WTC11 (cell line): ENCODE measurements at regions of chr17 and their contacts with region 1.

Region 1: GRCh38 chr17:38982858-38983746 is 15.9 kb upstream of the FBXO47 start:
- DNase-seq: peak; percentile 47
- ATAC-seq: peak; percentile 67
- H3K4me3 Mint-ChIP-seq: no peak overlapping the region
- H3K27ac Mint-ChIP-seq: no peak overlapping the region
- H3K4me1 Mint-ChIP-seq: no peaks in the 10 kb centered on the region
- H3K27me3 Mint-ChIP-seq: no peaks in the 10 kb centered on the region
- CTCF ChIP-seq: peak; percentile 35; the same call in 1 of the 2 replicates

Region 2: GRCh38 chr17:38881600-38882191 is 101.4 kb before region 1 on chr17:
- CTCF ChIA-PET with region 1: no interaction called
- POLR2A ChIA-PET with region 1: no interaction called
- DNase-seq: no peak
- ATAC-seq: no peak
- H3K4me3 Mint-ChIP-seq: peak overlapping the region; percentile 22; the same call in 1 of the 2 replicates
- H3K27ac Mint-ChIP-seq: peak overlapping the region; percentile 96
- H3K4me1 Mint-ChIP-seq: peaks cover 94% of the 10 kb centered on the region
- H3K27me3 Mint-ChIP-seq: no peaks in the 10 kb centered on the region
- CTCF ChIP-seq: no peak

Region 3: DNA sequence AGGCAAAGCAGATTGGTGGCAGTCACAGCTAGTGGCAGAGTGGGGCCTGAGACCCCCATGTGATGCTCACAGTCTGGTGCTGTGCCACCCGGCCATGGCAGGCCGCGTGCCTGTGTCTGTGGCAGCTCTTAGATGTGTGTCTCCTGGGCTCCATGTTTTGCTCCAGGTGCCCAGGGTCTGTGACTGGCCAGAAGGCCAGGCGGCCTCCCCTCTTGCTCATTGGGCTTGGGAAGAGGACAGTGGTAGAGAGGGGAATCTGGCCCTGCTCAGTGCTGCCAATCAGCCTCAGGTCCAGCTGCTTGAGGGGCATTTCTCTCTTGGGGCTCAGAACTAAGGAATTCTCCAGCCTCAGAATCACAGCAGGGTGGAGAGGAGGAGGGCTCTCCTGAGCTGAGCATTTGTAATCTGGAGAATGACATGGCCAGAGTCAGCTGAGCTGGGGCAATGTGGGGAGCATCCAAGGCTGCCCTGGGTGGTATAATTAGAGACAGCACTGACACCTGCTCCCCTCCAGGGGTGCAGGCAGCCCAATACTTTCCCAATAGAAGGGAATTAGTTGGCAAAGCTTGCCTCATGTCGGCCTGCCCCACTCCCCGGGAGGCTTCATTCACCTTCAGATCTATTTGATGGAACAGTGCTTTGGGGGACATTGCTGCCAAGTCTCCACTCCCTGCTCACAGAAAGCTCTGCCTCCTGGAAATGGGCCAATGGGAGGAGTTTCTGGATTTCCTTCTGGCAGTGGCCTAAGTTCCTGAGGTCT is 60.4 kb before region 1 on chr17:
- CTCF ChIA-PET with region 1: interaction called, 28 read pairs
- POLR2A ChIA-PET with region 1: no interaction called
- DNase-seq: peak; percentile 53
- ATAC-seq: peak; percentile 55
- H3K4me3 Mint-ChIP-seq: no peak overlapping the region
- H3K27ac Mint-ChIP-seq: peak overlapping the region; percentile 45; the same call in 1 of the 2 replicates
- H3K4me1 Mint-ChIP-seq: peaks cover 38% of the 10 kb centered on the region
- H3K27me3 Mint-ChIP-seq: no peaks in the 10 kb centered on the region; the same call in 1 of the 2 replicates
- CTCF ChIP-seq: no peak

Region 4: GRCh38 chr17:39026980-39027451 is 43.9 kb after region 1 on chr17:
- CTCF ChIA-PET with region 1: interaction called, 21 read pairs
- POLR2A ChIA-PET with region 1: no interaction called
- DNase-seq: peak; percentile 72
- ATAC-seq: peak; percentile 95
- H3K4me3 Mint-ChIP-seq: peak overlapping the region; percentile 68
- H3K27ac Mint-ChIP-seq: no peak overlapping the region
- H3K4me1 Mint-ChIP-seq: peaks cover 9% of the 10 kb centered on the region
- H3K27me3 Mint-ChIP-seq: peaks cover 38% of the 10 kb centered on the region
- CTCF ChIP-seq: no peak

Region 5: DNA sequence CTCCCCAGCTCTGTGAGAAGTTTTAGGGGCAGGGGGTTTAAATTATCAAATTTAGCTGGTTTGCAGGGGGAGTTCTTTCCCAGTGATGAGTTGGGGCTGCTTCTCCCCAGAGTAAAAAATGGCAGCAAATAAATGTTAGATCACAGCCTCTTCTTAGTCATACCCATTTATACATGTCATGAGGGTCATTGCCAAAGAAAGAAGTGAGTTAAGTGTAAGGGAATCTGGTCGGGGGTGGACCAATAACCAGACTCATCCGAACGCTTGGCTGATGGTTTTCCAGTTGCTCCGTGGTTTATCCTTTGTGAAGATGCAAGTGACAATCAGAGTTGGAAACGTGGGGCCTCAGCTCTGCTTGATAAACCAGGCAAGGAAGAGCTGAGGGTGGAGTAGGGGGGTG is 81.3 kb after region 1 on chr17:
- CTCF ChIA-PET with region 1: interaction called, 18 read pairs
- POLR2A ChIA-PET with region 1: interaction called, 3 read pairs
- DNase-seq: no peak
- ATAC-seq: no peak
- H3K4me3 Mint-ChIP-seq: no peak overlapping the region
- H3K27ac Mint-ChIP-seq: no peak overlapping the region
- H3K4me1 Mint-ChIP-seq: peaks cover 18% of the 10 kb centered on the region
- H3K27me3 Mint-ChIP-seq: no peaks in the 10 kb centered on the region
- CTCF ChIP-seq: no peak

Region 6: GRCh38 chr17:39094607-39095308 is 111.7 kb after region 1 on chr17:
- CTCF ChIA-PET with region 1: interaction called, 21 read pairs
- POLR2A ChIA-PET with region 1: no interaction called
- DNase-seq: no peak
- ATAC-seq: no peak
- H3K4me3 Mint-ChIP-seq: no peak overlapping the region
- H3K27ac Mint-ChIP-seq: 0 out of 2 replicates have a peak overlapping the region, but pooled peaks have one; percentile 25
- H3K4me1 Mint-ChIP-seq: peaks cover 30% of the 10 kb centered on the region
- H3K27me3 Mint-ChIP-seq: no peaks in the 10 kb centered on the region
- CTCF ChIP-seq: no peak

Region 7: GRCh38 chr17:39153599-39154051 is 170.5 kb after region 1 on chr17:
- CTCF ChIA-PET with region 1: interaction called, 191 read pairs
- POLR2A ChIA-PET with region 1: interaction called, 4 read pairs
- DNase-seq: peak; percentile 92
- ATAC-seq: peak; percentile 22
- H3K4me3 Mint-ChIP-seq: peak overlapping the region; percentile 100
- H3K27ac Mint-ChIP-seq: peak overlapping the region; percentile 13
- H3K4me1 Mint-ChIP-seq: peaks cover 21% of the 10 kb centered on the region
- H3K27me3 Mint-ChIP-seq: peaks cover 43% of the 10 kb centered on the region
- CTCF ChIP-seq: no peak

Region 8: GRCh38 chr17:39235555-39236449 is 252.7 kb after region 1 on chr17:
- CTCF ChIA-PET with region 1: interaction called, 10 read pairs
- POLR2A ChIA-PET with region 1: no interaction called
- DNase-seq: peak; percentile 79
- ATAC-seq: peak; percentile 85
- H3K4me3 Mint-ChIP-seq: peak overlapping the region; percentile 35; the same call in 1 of the 2 replicates
- H3K27ac Mint-ChIP-seq: peak overlapping the region; percentile 80; the same call in 1 of the 2 replicates
- H3K4me1 Mint-ChIP-seq: peaks cover 25% of the 10 kb centered on the region
- H3K27me3 Mint-ChIP-seq: peaks cover 6% of the 10 kb centered on the region; the same call in 1 of the 2 replicates
- CTCF ChIP-seq: peak; percentile 94